ENCODE measurements at regions of chr22 and their contacts with region 1.

Region 1: DNA sequence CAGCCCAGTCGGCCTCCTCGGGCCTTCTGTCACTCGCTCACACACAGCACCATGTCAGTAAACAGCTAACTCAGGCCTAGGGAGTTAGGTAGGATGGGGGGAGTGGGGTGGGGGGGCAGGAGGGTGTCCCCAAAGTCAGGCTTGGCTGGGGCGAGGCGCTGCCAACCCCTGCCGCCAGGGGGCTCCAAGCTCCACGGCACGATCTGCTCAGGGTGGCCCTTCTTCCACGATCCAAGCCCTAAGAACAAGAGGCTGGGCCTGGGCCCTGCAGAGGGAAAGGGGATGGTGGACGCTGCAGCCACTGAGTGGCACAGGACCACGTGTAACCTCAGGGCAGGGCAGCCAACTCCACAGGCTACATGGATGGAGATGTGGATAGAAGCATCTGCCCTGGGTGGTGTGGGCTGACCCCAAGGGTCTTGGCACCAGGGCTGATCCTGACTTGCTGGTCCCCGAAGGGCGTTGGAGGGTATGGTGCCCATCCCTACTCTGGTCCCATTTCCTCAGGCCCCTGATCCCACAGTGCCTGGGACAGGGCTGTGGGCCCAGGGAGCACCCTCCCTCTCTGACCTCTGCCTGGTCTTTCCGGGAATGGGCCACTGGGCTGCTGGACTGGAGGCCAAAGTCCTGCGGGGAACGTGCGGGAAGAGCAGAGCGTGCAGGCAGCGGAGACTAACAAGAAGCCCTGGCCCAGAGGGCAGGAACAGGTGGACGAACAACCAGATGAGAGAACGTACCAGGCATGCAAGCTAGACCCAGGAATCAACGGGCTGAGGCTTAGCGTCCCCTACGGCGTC is 29.1 kb upstream of the TXNRD2 start:
- DNase-seq: peak; percentile 80
- ATAC-seq: peak; percentile 76
- H3K4me3 ChIP-seq: no peak overlapping the region
- H3K4me3 Mint-ChIP-seq: no peak overlapping the region
- H3K27ac ChIP-seq: no peak overlapping the region
- H3K27ac Mint-ChIP-seq: no peak overlapping the region
- H3K4me1 ChIP-seq: peaks cover 0 to 4% of the 10 kb centered on the region in 2 donors
- H3K4me1 Mint-ChIP-seq: peaks cover 14% of the 10 kb centered on the region
- H3K27me3 ChIP-seq: no peaks in the 10 kb centered on the region
- H3K27me3 Mint-ChIP-seq: no peaks in the 10 kb centered on the region
- CTCF ChIP-seq: peak; percentile 98

Region 2: DNA sequence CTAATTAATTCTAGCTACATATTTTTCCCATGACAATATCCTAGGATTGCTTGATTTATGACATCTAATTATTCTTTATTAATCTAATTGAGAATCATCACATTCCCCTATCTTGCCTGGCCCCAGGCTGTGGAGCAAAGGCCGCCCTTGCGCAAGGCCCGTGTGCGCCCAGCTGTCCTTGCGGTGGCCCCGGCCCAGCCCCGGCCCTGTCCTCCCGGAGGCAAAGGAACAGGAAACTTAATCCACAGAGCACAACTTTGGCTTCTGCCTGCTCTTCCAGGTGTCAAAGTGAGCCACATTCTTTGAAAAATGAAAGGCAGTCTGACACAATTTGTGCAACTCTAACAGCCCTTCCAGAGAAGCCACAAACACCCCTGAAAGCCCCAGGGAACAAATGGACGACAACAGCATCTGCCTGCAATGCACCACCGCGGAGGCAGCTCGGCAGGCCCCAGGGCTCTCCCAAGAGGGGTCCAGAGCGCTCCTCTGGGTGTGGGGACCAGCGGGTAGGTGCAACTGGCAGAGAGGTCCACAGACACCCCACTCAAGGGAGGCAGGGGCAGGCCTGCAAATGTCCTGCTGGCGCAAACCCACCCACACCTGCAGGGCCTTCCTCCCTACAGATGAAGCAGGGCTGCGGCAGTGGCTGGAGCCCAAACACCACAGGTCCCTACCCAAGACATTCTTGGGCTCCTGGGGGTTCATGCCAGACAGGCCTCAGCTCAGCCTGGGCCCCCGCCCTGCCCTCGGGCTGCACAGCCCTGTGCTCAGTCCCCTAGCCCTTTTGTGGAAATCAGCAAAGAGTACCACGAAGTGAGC is 146.3 kb before region 1 on chr22:
- CTCF ChIA-PET with region 1: no interaction called
- POLR2A ChIA-PET with region 1: no interaction called
- intact Hi-C with region 1: no loop called
- DNase-seq: no peak
- ATAC-seq: no peak
- H3K4me3 ChIP-seq: no peak overlapping the region
- H3K4me3 Mint-ChIP-seq: no peak overlapping the region
- H3K27ac ChIP-seq: no peak overlapping the region
- H3K27ac Mint-ChIP-seq: no peak overlapping the region
- H3K4me1 ChIP-seq: no peaks in the 10 kb centered on the region
- H3K4me1 Mint-ChIP-seq: peaks cover 1% of the 10 kb centered on the region
- H3K27me3 ChIP-seq: no peaks in the 10 kb centered on the region
- H3K27me3 Mint-ChIP-seq: no peaks in the 10 kb centered on the region
- CTCF ChIP-seq: no peak

Region 3: GRCh38 chr22:19986410-19987341 is 16.0 kb after region 1 on chr22:
- CTCF ChIA-PET with region 1: interaction called, 3 read pairs
- POLR2A ChIA-PET with region 1: no interaction called
- intact Hi-C with region 1: loop called (anchors 1 kb)
- DNase-seq: peak; percentile 78
- ATAC-seq: peak; percentile 89
- H3K4me3 ChIP-seq: peak overlapping the region in 4 of 5 experiments; percentile 41 to 66 (median 64)
- H3K4me3 Mint-ChIP-seq: peak overlapping the region; percentile 72
- H3K27ac ChIP-seq: no peak overlapping the region
- H3K27ac Mint-ChIP-seq: no peak overlapping the region
- H3K4me1 ChIP-seq: peaks cover 10 to 13% of the 10 kb centered on the region in 2 donors
- H3K4me1 Mint-ChIP-seq: peaks cover 7% of the 10 kb centered on the region
- H3K27me3 ChIP-seq: peaks cover 0 to 11% (median 0%) of the 10 kb centered on the region in 4 experiments
- H3K27me3 Mint-ChIP-seq: no peaks in the 10 kb centered on the region
- CTCF ChIP-seq: no peak

Region 4: GRCh38 chr22:20000169-20000621 is 29.5 kb after region 1 on chr22:
- CTCF ChIA-PET with region 1: no interaction called
- POLR2A ChIA-PET with region 1: no interaction called
- intact Hi-C with region 1: no loop called
- DNase-seq: no peak
- ATAC-seq: no peak
- H3K4me3 ChIP-seq: no peak overlapping the region
- H3K4me3 Mint-ChIP-seq: no peak overlapping the region
- H3K27ac ChIP-seq: no peak overlapping the region
- H3K27ac Mint-ChIP-seq: no peak overlapping the region
- H3K4me1 ChIP-seq: no peaks in the 10 kb centered on the region
- H3K4me1 Mint-ChIP-seq: no peaks in the 10 kb centered on the region
- H3K27me3 ChIP-seq: no peaks in the 10 kb centered on the region
- H3K27me3 Mint-ChIP-seq: no peaks in the 10 kb centered on the region
- CTCF ChIP-seq: no peak

Region 5: GRCh38 chr22:20027966-20028854 is 57.5 kb after region 1 on chr22:
- CTCF ChIA-PET with region 1: interaction called, 4 read pairs
- POLR2A ChIA-PET with region 1: no interaction called
- intact Hi-C with region 1: loop called (anchors 1 kb)
- DNase-seq: peak; percentile 16
- ATAC-seq: no peak
- H3K4me3 ChIP-seq: no peak overlapping the region
- H3K4me3 Mint-ChIP-seq: no peak overlapping the region
- H3K27ac ChIP-seq: no peak overlapping the region
- H3K27ac Mint-ChIP-seq: peak overlapping the region; percentile 46
- H3K4me1 ChIP-seq: peaks cover 21 to 34% of the 10 kb centered on the region in 2 donors
- H3K4me1 Mint-ChIP-seq: peaks cover 56% of the 10 kb centered on the region
- H3K27me3 ChIP-seq: no peaks in the 10 kb centered on the region
- H3K27me3 Mint-ChIP-seq: no peaks in the 10 kb centered on the region
- CTCF ChIP-seq: peak; percentile 34

Region 6: GRCh38 chr22:20079745-20080444 is 109.2 kb after region 1 on chr22 and contains the start of gene DGCR8:
- CTCF ChIA-PET with region 1: no interaction called
- POLR2A ChIA-PET with region 1: no interaction called
- intact Hi-C with region 1: loop called (anchors 1 kb)
- DNase-seq: peak; percentile 89
- ATAC-seq: peak; percentile 95
- H3K4me3 ChIP-seq: peak within 1 kb of the TSS; percentile 71 to 95 (median 86)
- H3K4me3 Mint-ChIP-seq: peak within 1 kb of the TSS; percentile 95
- H3K27ac ChIP-seq: peak within 1 kb of the TSS; percentile 29 to 70
- H3K27ac Mint-ChIP-seq: peak within 1 kb of the TSS; percentile 89
- H3K4me1 ChIP-seq: peaks cover 9 to 21% of the 10 kb centered on the region in 2 donors
- H3K4me1 Mint-ChIP-seq: peaks cover 37% of the 10 kb centered on the region
- H3K27me3 ChIP-seq: no peaks in the 10 kb centered on the region
- H3K27me3 Mint-ChIP-seq: no peaks in the 10 kb centered on the region
- CTCF ChIP-seq: no peak
- total RNA-seq, gene DGCR8: 43.2 and 46.6 TPM in 2 replicates

Region 7: DNA sequence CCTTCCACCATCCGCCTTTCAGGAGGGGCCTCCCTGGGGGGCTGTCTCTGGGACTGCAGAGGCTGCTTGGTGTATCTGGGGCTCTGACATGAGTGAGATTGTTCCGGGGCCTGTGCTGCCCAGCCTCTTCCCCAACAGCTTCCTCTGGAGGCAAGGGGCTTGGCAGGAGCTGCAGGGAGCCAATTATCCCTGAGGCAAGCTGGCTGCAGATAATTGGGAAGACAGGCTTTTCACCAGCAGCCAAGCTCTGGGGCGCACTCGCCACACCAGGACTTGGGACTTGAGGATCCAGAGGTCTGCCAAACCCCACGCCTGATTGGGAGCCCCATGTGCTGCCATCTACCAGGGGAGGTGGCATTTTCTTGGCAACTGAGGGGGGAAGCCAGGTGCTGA is 313.0 kb after region 1 on chr22:
- CTCF ChIA-PET with region 1: interaction called, 11 read pairs
- POLR2A ChIA-PET with region 1: no interaction called
- intact Hi-C with region 1: no loop called
- DNase-seq: no peak
- ATAC-seq: no peak
- H3K4me3 ChIP-seq: no peak overlapping the region
- H3K4me3 Mint-ChIP-seq: no peak overlapping the region
- H3K27ac ChIP-seq: no peak overlapping the region
- H3K27ac Mint-ChIP-seq: no peak overlapping the region
- H3K4me1 ChIP-seq: peaks cover 0 to 3% of the 10 kb centered on the region in 2 donors
- H3K4me1 Mint-ChIP-seq: peaks cover 4% of the 10 kb centered on the region
- H3K27me3 ChIP-seq: peaks cover 0 to 4% (median 0%) of the 10 kb centered on the region in 4 experiments
- H3K27me3 Mint-ChIP-seq: peaks cover 4% of the 10 kb centered on the region
- CTCF ChIP-seq: no peak